Pancreas (tissue), 10 donors: ENCODE measurements at regions of chrX and their contacts with region 1.

Region 1: DNA sequence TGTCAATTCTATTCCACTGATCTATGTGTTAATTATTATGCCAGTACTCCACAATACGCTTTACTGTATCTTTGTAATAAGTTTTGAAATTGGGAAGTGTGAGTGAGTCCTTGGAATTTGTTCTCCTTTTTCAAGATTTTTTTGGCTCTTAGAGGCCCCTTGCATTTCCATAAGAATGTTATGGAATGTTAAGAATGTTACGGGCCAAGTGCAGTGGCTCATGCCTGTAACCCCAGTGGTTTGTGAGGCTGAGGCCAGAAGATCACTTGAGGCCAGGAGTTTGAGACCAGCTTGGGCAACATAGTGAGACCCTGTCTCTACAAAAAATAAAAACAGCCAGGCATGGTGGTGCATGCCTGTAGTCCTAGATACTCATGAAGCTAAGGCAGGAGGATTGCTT is 167.6 kb upstream of the CXorf66 start:
- DNase-seq: no peak
- ATAC-seq: no peak
- H3K4me3 ChIP-seq: no peak overlapping the region
- H3K27ac ChIP-seq: no peak overlapping the region
- H3K4me1 ChIP-seq: no peaks in the 10 kb centered on the region
- H3K27me3 ChIP-seq: peaks cover 0 to 17% (median 0%) of the 10 kb centered on the region in 4 donors
- CTCF ChIP-seq: no peak

Region 2: GRCh38 chrX:140071037-140071436 is 61.9 kb before region 1 on chrX:
- intact Hi-C with region 1: no loop called
- DNase-seq: no peak
- ATAC-seq: no peak
- H3K4me3 ChIP-seq: no peak overlapping the region
- H3K27ac ChIP-seq: no peak overlapping the region
- H3K4me1 ChIP-seq: no peaks in the 10 kb centered on the region
- H3K27me3 ChIP-seq: peaks cover 0 to 3% (median 0%) of the 10 kb centered on the region in 4 donors
- CTCF ChIP-seq: no peak

Region 3: GRCh38 chrX:140087875-140088274 is 45.1 kb before region 1 on chrX:
- intact Hi-C with region 1: loop called in 1 of 3 experiments (anchors 10 kb)
- DNase-seq: no peak
- ATAC-seq: no peak
- H3K4me3 ChIP-seq: no peak overlapping the region
- H3K27ac ChIP-seq: no peak overlapping the region
- H3K4me1 ChIP-seq: no peaks in the 10 kb centered on the region
- H3K27me3 ChIP-seq: peaks cover 0 to 33% (median 19%) of the 10 kb centered on the region in 4 donors
- CTCF ChIP-seq: no peak